Posterior vena cava (tissue), 2 donors: ENCODE measurements at regions of chr2 and their contacts with region 1.

Region 1: DNA sequence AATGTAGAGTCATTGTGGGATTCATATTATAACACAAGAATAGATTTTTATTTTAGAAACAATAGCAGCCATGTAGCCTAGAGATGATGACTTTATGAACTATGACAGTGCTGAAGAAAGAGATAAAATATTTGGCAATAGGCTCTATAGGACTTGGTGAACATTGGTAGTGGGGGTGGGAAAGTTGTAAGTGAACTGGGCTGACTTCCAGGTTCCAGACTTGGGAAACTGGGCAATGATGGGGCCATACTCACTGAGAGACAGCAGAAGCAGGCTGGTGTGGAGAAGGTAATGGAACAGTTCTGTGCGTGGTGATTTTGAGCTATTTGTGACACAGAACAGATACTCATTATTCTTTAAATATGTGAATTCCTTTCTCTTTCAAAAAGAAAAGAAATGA is 470.3 kb upstream of the HNRNPA3 start:
- DNase-seq: no peak

Region 2: GRCh38 chr2:176669398-176670174 is 72.7 kb before region 1 on chr2:
- intact Hi-C with region 1: loop called in 1 of 2 experiments (anchors 2 kb)
- DNase-seq: no peak